ENCODE measurements at regions of chr4 and their contacts with region 1.

Region 1: GRCh38 chr4:99563310-99564186 is at the start of gene TRMT10A:
- DNase-seq: peak; percentile 98
- ATAC-seq: peak; percentile 99
- total RNA-seq, gene TRMT10A: 4.6 TPM

Region 2: GRCh38 chr4:99447079-99447478 is 116.5 kb before region 1 on chr4:
- intact Hi-C with region 1: no loop called
- DNase-seq: no peak
- ATAC-seq: no peak

Region 3: DNA sequence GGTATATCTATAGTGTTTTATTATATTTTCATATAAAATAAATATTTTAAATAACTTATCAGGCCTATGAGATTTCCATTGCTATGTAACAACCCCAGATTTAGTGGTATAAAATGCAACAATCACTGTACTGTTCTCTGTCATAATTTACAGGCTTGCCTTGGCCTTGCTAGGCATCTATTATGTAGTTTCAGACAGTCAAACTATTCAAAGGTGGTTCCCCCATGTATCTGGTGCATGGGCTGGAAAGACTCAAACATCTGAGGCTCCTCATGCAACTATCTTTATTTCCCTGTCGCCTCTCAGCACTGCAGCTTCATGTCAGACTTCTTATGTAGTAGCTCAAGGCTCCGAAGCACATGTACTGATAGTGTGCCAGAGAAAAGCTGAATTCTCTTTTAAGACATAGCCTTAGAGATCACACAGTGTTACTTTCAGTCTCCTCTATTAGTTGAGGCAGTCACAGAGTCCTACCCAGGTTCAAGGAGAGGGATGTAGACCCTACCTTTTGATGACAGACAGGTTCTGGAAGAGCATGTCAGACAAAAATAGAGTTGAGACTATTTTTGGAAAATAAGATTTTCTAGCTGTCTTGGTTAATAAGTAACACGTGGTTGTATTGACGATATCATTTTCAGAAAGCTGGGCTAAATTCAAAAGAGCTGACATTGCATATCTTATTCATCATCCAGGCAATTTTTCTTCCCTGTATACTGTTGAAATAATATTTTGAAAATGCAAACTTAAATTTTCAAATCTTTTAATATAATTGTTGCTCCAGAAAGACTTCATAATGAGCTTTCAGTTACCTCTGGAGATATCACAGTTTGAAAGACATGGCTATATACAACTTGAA is 30.5 kb after region 1 on chr4:
- intact Hi-C with region 1: no loop called
- DNase-seq: no peak
- ATAC-seq: no peak

Region 4: GRCh38 chr4:99808260-99808857 is 244.8 kb after region 1 on chr4:
- intact Hi-C with region 1: loop called (anchors 5 kb)
- DNase-seq: peak; percentile 70
- ATAC-seq: peak; percentile 79

Region 5: DNA sequence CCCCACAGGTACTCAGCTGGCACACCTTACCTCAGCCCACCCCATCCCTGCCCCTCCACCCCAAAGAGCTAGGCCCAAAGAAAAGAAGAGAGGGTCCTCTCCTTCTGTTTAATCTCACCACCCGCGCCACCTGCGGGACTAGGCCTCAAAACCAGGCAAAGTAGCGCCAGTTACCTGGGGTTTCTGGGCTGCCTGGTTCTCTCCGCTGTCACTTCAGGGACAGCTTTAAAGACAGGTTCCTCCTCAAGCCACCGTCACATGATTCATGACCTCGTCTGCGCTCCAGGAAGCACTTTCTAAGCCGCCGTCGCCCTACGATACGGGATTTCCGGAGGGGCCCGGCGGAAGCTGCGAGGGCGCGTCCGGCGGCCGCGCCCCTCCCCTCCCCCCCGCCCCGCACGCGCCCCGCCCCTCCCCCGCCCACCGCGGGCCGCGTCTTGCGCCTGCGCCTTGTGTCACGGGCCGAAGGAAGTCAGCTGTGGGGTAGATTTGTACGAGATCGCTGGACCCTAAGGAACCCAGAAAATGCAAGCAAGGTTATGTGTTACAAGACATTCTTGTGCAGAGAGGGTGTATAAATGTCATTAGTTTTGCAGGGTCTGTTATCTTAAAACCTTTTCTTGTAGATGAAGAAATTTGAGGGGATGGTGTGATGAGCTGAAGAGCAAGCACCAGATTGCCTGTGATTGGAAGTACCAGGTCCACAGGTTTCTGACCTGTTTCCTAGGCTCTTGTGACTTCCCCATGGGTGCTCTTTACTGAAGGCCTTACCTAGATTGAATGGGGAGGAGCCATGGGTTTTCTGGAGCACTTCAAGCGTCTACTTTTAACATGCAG is 330.8 kb after region 1 on chr4 and contains the start of gene LAMTOR3:
- intact Hi-C with region 1: loop called (anchors 5 kb)
- DNase-seq: peak; percentile 93
- ATAC-seq: peak; percentile 99
- total RNA-seq, gene LAMTOR3: 38.9 TPM

Region 6: DNA sequence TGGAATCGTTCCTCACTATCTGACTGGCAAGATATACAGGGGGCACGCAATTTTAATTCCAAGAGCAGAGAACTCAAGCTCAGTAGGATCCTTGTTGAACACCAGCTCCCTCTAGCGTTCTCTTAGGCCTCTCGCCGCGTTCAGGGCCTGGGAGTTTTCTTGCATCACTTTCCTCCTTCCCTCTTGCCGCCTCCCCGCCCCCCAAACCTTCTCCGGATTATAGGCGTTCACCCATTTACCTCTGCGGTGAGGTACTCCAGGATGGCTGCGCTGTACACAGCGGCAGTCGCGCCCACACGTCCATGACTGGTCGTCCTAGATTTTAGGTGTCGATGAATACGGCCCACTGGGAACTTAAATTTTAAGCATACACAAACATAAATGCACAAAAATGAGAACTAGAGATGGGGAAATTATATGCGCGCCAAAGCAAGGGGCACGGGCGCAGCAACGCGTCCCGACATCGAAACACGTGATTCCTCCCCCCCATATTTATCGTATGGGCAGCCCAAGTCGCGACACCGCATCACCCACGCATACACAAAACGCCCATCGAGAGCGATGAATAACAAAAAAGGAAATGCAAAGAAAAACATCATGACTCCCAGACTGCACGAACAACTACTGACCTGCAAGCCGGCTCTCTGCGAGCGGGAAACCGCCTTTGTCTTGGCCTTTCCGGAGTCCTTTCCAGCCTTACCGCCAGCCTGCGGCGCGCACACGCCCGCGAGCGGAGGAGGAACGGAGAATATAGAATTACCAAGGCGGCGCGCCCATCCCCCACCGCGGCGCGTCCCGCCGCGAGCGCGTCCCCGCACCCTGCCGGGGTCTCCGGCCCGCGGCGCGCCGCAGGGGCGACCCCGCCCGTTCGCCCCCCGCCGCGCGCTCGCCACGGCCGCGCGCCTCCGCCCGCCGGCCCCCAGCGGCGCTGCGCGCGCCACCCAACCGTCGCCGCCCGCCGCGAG is 385.8 kb after region 1 on chr4:
- intact Hi-C with region 1: loop called (anchors 5 kb)
- DNase-seq: peak; percentile 86
- ATAC-seq: peak; percentile 31

Measured in left ventricle myocardium superior (tissue), 1 donor.